K562 (cell line): ENCODE measurements at regions of chr1 and their contacts with region 1.

Region 1: GRCh38 chr1:226407497-226408284 is at the start of gene PARP1:
- DNase-seq: peak; percentile 96 to 99 (median 98)
- ATAC-seq: peak; percentile 88
- H3K4me3 ChIP-seq: peak within 1 kb of the TSS; percentile 78
- H3K27ac ChIP-seq: peak within 1 kb of the TSS; percentile 84
- H3K4me1 ChIP-seq: peaks cover 33 to 34% of the 10 kb centered on the region in 2 experiments
- H3K27me3 ChIP-seq: no peaks in the 10 kb centered on the region; a peak in 1 of 5 replicates
- CTCF ChIP-seq: peak; percentile 69 to 88 (median 81)
- EP300 ChIP-seq: peak; percentile 44; the same call in 1 of the 2 replicates
- POLR2A ChIP-seq: peak; percentile 94
- RAD21 ChIP-seq: peak; percentile 1 to 35; a peak in 2 of 4 replicates
- polyA plus RNA-seq, gene PARP1: 121 to 211 TPM

Region 2: DNA sequence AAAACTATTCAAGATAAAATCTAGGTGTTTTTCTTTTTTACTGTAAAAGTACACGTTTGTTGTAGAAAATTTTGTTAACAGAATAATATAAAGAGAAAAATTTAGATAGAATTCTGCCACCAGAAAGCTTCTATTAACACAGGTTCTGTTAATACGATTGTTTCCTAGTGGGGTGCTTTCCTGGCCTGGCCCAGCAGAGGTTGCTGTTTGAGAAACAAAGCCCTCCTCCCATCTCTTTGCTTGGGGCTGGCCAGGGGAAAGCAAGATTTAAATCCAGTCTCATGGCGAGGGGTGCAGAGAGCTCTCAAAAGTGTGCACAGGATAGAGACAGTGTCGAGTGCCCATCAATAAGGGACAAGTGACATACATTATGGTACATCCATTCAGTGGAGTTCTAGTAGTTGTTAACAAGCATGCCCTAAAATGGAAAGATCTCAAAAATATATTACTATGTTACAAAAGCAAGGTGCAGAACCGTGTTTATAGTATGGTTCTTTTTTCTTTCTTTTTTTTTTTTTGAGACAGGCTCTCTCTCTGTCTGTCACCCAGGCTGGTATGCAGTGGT is 206.6 kb before region 1 on chr1:
- CTCF ChIA-PET with region 1: interaction called, 3 read pairs
- POLR2A ChIA-PET with region 1: no interaction called
- in situ Hi-C with region 1: no loop called
- intact Hi-C with region 1: loop called (anchors 5 kb)
- DNase-seq: peak in 3 of 4 experiments; percentile 41 to 66 (median 53)
- ATAC-seq: peak; percentile 80
- H3K4me3 ChIP-seq: no peak overlapping the region
- H3K27ac ChIP-seq: no peak overlapping the region
- H3K4me1 ChIP-seq: peaks cover 0 to 6% of the 10 kb centered on the region in 2 experiments; a peak in 1 of 5 replicates
- H3K27me3 ChIP-seq: no peaks in the 10 kb centered on the region
- CTCF ChIP-seq: peak; percentile 65 to 80 (median 71)
- EP300 ChIP-seq: no peak
- POLR2A ChIP-seq: no peak
- RAD21 ChIP-seq: peak; percentile 50 to 79

Region 3: DNA sequence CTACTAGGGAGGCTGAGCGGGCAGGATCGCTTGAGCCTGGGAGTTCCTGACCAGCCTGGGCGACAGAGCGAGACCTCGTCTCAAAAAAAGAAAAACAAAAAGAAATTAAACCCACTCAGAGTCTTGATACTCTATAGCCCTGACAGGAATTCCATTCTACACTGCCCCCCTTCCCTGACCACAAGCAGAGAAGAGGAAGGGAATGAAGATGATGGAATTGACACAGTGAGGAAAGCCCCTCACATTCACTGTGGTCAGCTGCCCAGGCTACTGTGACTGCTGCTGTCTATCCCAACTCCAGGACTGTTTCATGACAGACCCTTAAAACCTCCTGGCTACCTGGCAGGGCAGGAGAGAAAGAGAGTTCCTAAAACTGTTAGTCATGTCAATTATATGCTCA is 110.8 kb before region 1 on chr1:
- CTCF ChIA-PET with region 1: no interaction called
- POLR2A ChIA-PET with region 1: no interaction called
- in situ Hi-C with region 1: no loop called
- intact Hi-C with region 1: no loop called
- DNase-seq: no peak
- ATAC-seq: no peak
- H3K4me3 ChIP-seq: no peak overlapping the region
- H3K27ac ChIP-seq: no peak overlapping the region
- H3K4me1 ChIP-seq: no peaks in the 10 kb centered on the region
- H3K27me3 ChIP-seq: no peaks in the 10 kb centered on the region
- CTCF ChIP-seq: no peak
- EP300 ChIP-seq: no peak
- POLR2A ChIP-seq: no peak
- RAD21 ChIP-seq: no peak

Region 4: GRCh38 chr1:226308723-226309315 is 98.9 kb before region 1 on chr1 and contains the start of gene LIN9:
- CTCF ChIA-PET with region 1: no interaction called
- POLR2A ChIA-PET with region 1: interaction called, 8 read pairs
- in situ Hi-C with region 1: no loop called
- intact Hi-C with region 1: loop called (anchors 5 kb)
- DNase-seq: peak; percentile 92 to 98 (median 95)
- ATAC-seq: peak; percentile 85
- H3K4me3 ChIP-seq: peak within 1 kb of the TSS; percentile 100
- H3K27ac ChIP-seq: peak within 1 kb of the TSS; percentile 99
- H3K4me1 ChIP-seq: peaks cover 22 to 28% of the 10 kb centered on the region in 2 experiments
- H3K27me3 ChIP-seq: no peaks in the 10 kb centered on the region; a peak in 1 of 5 replicates
- CTCF ChIP-seq: no peak; a peak in 1 of 6 replicates
- EP300 ChIP-seq: peak; percentile 20; the same call in 1 of the 2 replicates
- POLR2A ChIP-seq: peak; percentile 97
- RAD21 ChIP-seq: 0 out of 4 replicates have a peak, but pooled peaks of 1 of the 2 experiments have one; percentile 9
- polyA plus RNA-seq, gene LIN9: 19.4 to 26.8 TPM

Region 5: GRCh38 chr1:226397011-226397926 is 10.4 kb before region 1 on chr1:
- CTCF ChIA-PET with region 1: no interaction called
- POLR2A ChIA-PET with region 1: interaction called, 14 read pairs
- in situ Hi-C with region 1: no loop called
- intact Hi-C with region 1: no loop called
- DNase-seq: no peak
- ATAC-seq: no peak
- H3K4me3 ChIP-seq: no peak overlapping the region
- H3K27ac ChIP-seq: 0 out of 3 replicates have a peak overlapping the region, but pooled peaks have one; percentile 11
- H3K4me1 ChIP-seq: no peaks in the 10 kb centered on the region
- H3K27me3 ChIP-seq: no peaks in the 10 kb centered on the region
- CTCF ChIP-seq: no peak
- EP300 ChIP-seq: no peak
- POLR2A ChIP-seq: no peak
- RAD21 ChIP-seq: no peak

Region 6: GRCh38 chr1:226626577-226626956 is 218.9 kb after region 1 on chr1:
- CTCF ChIA-PET with region 1: no interaction called
- POLR2A ChIA-PET with region 1: no interaction called
- in situ Hi-C with region 1: no loop called
- intact Hi-C with region 1: no loop called
- DNase-seq: peak; percentile 78 to 89 (median 86)
- ATAC-seq: peak; percentile 97
- H3K4me3 ChIP-seq: no peak overlapping the region
- H3K27ac ChIP-seq: no peak overlapping the region
- H3K4me1 ChIP-seq: no peaks in the 10 kb centered on the region
- H3K27me3 ChIP-seq: peaks cover 3 to 47% of the 10 kb centered on the region in 2 experiments; a peak in 3 of 5 replicates
- CTCF ChIP-seq: peak; percentile 95 to 98 (median 97)
- EP300 ChIP-seq: no peak
- POLR2A ChIP-seq: no peak
- RAD21 ChIP-seq: peak; percentile 60 to 80